ENCODE measurements at regions of chr2 and their contacts with region 1.

Region 1: DNA sequence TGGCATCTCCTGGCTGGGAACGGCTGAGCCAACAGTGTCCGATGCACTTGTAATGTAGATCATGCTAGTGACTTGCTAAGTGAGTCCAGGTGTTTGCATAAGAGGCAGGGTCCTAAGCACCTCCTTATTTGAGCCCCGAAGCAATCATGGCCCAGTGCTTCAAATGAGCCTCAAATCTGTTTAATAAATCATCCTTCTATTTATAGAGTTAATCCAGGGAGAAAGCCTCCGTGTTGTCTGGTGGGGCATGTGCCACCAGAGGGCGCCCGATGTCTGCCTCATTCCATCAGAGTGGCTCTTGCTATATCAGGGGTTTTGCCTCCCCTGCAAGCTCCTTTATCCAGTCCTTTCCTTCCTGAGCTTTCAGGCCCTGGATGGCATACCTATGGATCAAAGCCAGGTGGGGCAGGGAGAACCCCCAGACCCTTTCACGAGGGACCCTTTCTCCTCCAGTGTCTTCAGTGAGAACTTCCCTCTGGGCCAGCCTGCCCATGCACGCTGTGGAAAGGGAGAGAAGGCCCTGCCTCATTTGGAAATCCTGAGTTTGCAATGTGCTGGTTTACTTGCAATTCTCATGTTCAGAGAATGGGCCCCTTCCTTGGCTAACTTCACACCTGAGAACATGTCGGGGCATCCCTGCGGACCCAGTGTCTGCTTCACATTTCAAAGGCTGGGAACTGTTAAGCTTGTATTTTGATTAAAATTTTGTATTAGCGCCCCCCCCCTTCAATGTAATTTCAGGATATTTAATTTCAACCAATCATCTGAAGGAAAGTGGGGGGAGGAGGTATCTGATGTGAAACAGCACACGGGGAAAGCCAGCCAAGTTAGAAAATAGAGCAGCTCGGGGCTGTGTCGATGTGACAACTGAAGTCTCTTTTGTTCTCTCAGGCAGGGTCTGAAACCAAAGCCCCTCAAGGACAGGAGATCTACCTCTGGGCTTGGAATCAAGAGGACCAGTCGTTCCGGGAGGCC is 39.7 kb downstream of the RDH14 start:
- DNase-seq: peak; percentile 44 to 85 (median 76)
- ATAC-seq: peak; percentile 65
- H3K4me3 ChIP-seq: no peak overlapping the region
- H3K4me3 Mint-ChIP-seq: no peak overlapping the region
- H3K27ac ChIP-seq: no peak overlapping the region
- H3K27ac Mint-ChIP-seq: no peak overlapping the region
- H3K4me1 ChIP-seq: no peaks in the 10 kb centered on the region
- H3K4me1 Mint-ChIP-seq: no peaks in the 10 kb centered on the region
- H3K27me3 ChIP-seq: no peaks in the 10 kb centered on the region
- H3K27me3 Mint-ChIP-seq: peaks cover 26% of the 10 kb centered on the region
- CTCF ChIP-seq: peak; percentile 87

Region 2: DNA sequence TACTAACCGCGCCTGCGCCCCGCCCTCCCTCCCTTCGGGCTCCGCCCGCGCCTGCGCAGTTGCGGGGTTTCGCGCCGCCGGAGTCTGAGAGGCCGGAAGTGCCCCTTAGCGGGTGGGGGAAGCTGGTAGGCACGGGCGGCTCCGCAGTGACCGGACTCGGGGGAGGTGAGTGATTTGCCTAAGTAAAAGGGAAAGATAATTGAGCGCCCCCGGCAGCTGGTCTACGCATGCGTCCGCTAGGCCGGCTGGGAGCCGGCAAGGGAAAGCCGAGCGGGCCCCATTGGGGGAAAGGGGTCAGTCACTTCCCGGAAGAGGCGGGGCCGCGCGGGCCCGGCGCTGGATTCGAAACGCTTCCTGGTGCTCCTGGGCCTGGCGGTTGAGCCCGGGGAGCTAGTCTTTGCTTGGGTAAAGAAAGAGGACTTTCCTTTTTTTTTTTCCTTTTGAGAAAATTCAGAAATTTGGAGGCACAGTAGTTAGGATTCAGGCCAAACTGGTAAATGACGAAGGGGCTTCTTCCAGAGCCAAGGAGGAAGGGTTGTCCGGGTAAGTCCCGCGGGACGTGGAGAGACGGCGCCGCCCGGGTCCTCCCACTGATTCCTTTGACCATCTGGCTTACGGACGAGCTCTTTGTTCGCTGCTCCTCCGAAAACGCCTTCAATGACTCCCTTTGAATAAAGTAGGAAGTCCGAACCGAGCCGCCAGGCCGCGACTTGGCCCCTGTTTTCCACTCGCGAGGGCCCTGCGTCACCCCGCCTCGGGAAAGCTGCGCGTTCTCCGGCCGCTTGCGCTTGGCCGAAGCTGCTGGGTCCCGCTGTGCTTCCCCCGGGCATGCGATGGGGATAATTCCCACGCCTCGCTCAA is 766.7 kb before region 1 on chr2 and contains the starts of genes GEN1 and SMC6:
- CTCF ChIA-PET with region 1: no interaction called
- POLR2A ChIA-PET with region 1: no interaction called
- intact Hi-C with region 1: no loop called
- DNase-seq: peak; percentile 79 to 95 (median 90)
- ATAC-seq: peak; percentile 82
- H3K4me3 ChIP-seq: peak within 1 kb of the TSS; percentile 82 to 87
- H3K4me3 Mint-ChIP-seq: peak within 1 kb of the TSS; percentile 92
- H3K27ac ChIP-seq: peak within 1 kb of the TSS; percentile 95 to 100
- H3K27ac Mint-ChIP-seq: peak within 1 kb of the TSS; percentile 97
- H3K4me1 ChIP-seq: peaks cover 17% of the 10 kb centered on the region
- H3K4me1 Mint-ChIP-seq: peaks cover 27% of the 10 kb centered on the region
- H3K27me3 ChIP-seq: no peaks in the 10 kb centered on the region
- H3K27me3 Mint-ChIP-seq: no peaks in the 10 kb centered on the region
- CTCF ChIP-seq: no peak
- total RNA-seq, gene GEN1: 6.3 to 7.3 TPM
- total RNA-seq, gene SMC6: 5.0 to 6.2 TPM

Region 3: GRCh38 chr2:18067588-18068384 is 453.0 kb before region 1 on chr2:
- CTCF ChIA-PET with region 1: no interaction called
- POLR2A ChIA-PET with region 1: no interaction called
- intact Hi-C with region 1: no loop called
- DNase-seq: no peak
- ATAC-seq: no peak
- H3K4me3 ChIP-seq: no peak overlapping the region
- H3K4me3 Mint-ChIP-seq: no peak overlapping the region
- H3K27ac ChIP-seq: no peak overlapping the region
- H3K27ac Mint-ChIP-seq: no peak overlapping the region
- H3K4me1 ChIP-seq: no peaks in the 10 kb centered on the region
- H3K4me1 Mint-ChIP-seq: no peaks in the 10 kb centered on the region
- H3K27me3 ChIP-seq: no peaks in the 10 kb centered on the region
- H3K27me3 Mint-ChIP-seq: peaks cover 13% of the 10 kb centered on the region
- CTCF ChIP-seq: no peak

Region 4: GRCh38 chr2:18404708-18405107 is 116.0 kb before region 1 on chr2:
- CTCF ChIA-PET with region 1: no interaction called
- POLR2A ChIA-PET with region 1: no interaction called
- intact Hi-C with region 1: no loop called
- DNase-seq: no peak
- ATAC-seq: no peak
- H3K4me3 ChIP-seq: no peak overlapping the region
- H3K4me3 Mint-ChIP-seq: no peak overlapping the region
- H3K27ac ChIP-seq: no peak overlapping the region
- H3K27ac Mint-ChIP-seq: no peak overlapping the region
- H3K4me1 ChIP-seq: no peaks in the 10 kb centered on the region
- H3K4me1 Mint-ChIP-seq: no peaks in the 10 kb centered on the region
- H3K27me3 ChIP-seq: no peaks in the 10 kb centered on the region
- H3K27me3 Mint-ChIP-seq: peaks cover 8% of the 10 kb centered on the region
- CTCF ChIP-seq: no peak

Region 5: DNA sequence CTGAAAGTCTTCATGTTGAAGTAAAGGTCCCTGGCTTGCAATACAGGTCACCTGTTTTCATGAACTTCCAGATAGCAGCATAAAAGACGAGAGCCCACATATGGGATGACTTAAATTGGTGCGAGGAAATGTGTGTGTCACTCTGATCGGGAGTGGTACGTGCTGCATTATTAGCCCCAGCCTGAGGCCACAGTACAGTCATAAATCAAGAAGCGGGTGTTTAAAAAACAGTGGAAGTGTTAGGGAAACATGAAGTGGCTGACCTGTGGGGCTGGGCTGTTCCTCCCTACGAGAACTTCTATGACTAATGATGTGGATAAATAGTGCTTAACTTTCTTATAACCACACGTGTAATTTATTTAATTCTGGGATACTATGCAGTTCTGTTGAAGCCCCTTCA is 15.4 kb after region 1 on chr2:
- CTCF ChIA-PET with region 1: interaction called, 11 read pairs
- POLR2A ChIA-PET with region 1: no interaction called
- intact Hi-C with region 1: no loop called
- DNase-seq: no peak
- ATAC-seq: no peak
- H3K4me3 ChIP-seq: no peak overlapping the region
- H3K4me3 Mint-ChIP-seq: no peak overlapping the region
- H3K27ac ChIP-seq: no peak overlapping the region
- H3K27ac Mint-ChIP-seq: no peak overlapping the region
- H3K4me1 ChIP-seq: no peaks in the 10 kb centered on the region
- H3K4me1 Mint-ChIP-seq: no peaks in the 10 kb centered on the region
- H3K27me3 ChIP-seq: no peaks in the 10 kb centered on the region
- H3K27me3 Mint-ChIP-seq: peaks cover 13% of the 10 kb centered on the region
- CTCF ChIP-seq: no peak

Region 6: GRCh38 chr2:18588049-18588448 is 67.3 kb after region 1 on chr2:
- CTCF ChIA-PET with region 1: no interaction called
- POLR2A ChIA-PET with region 1: no interaction called
- intact Hi-C with region 1: no loop called
- DNase-seq: no peak
- ATAC-seq: no peak
- H3K4me3 ChIP-seq: no peak overlapping the region
- H3K4me3 Mint-ChIP-seq: no peak overlapping the region
- H3K27ac ChIP-seq: no peak overlapping the region
- H3K27ac Mint-ChIP-seq: no peak overlapping the region
- H3K4me1 ChIP-seq: no peaks in the 10 kb centered on the region
- H3K4me1 Mint-ChIP-seq: no peaks in the 10 kb centered on the region
- H3K27me3 ChIP-seq: no peaks in the 10 kb centered on the region
- H3K27me3 Mint-ChIP-seq: no peaks in the 10 kb centered on the region
- CTCF ChIP-seq: no peak

Region 7: DNA sequence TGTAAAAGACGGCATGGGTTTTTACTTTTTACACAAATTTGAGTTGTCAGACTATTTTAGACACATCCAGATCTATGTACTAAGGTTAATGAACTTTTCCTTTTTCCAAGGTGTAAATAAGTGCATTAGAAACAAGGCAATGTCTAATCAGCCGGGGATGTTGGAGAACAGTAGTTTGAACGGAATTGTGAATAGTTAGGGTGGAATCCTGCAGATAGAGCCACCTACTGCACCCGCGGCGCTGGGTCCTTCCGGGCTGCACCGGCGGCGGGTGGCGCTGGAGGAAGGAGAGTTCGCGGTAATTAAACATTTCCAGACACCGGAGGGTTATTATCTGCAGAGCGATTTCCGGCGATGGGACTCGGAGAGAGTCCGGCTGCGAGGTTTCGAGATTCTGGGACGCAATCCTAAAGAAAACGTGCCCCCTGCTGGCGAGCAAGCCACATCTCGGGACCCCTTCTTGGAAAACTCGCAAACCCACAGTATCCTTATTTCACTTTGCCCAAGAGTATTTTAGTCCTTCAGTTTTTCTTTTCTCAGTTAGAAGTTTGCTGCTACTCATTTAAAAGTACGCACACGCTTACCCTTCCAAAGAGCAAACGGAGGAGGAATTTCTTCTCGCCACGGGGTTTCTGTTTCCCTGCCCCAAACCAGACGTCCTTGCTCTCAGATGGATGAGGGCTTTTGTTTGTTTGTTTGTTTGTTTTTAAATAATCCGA is 842.2 kb after region 1 on chr2:
- CTCF ChIA-PET with region 1: interaction called, 15 read pairs
- POLR2A ChIA-PET with region 1: no interaction called
- intact Hi-C with region 1: loop called in 1 of 2 experiments (anchors 2 kb)
- DNase-seq: peak in 6 of 9 experiments; percentile 29 to 74 (median 52)
- ATAC-seq: peak; percentile 48
- H3K4me3 ChIP-seq: peak overlapping the region; percentile 67 to 70
- H3K4me3 Mint-ChIP-seq: peak overlapping the region; percentile 93
- H3K27ac ChIP-seq: no peak overlapping the region
- H3K27ac Mint-ChIP-seq: peak overlapping the region; percentile 68
- H3K4me1 ChIP-seq: peaks cover 36% of the 10 kb centered on the region
- H3K4me1 Mint-ChIP-seq: peaks cover 37% of the 10 kb centered on the region
- H3K27me3 ChIP-seq: peaks cover 28 to 33% of the 10 kb centered on the region in 2 experiments
- H3K27me3 Mint-ChIP-seq: peaks cover 33% of the 10 kb centered on the region
- CTCF ChIP-seq: peak; percentile 38

Region 8: GRCh38 chr2:19857806-19858205 is 1337.1 kb after region 1 on chr2:
- CTCF ChIA-PET with region 1: interaction called, 102 read pairs
- POLR2A ChIA-PET with region 1: no interaction called
- intact Hi-C with region 1: loop called in 1 of 2 experiments (anchors 1 kb)
- DNase-seq: no peak
- ATAC-seq: no peak
- H3K4me3 ChIP-seq: no peak overlapping the region
- H3K4me3 Mint-ChIP-seq: no peak overlapping the region
- H3K27ac ChIP-seq: no peak overlapping the region
- H3K27ac Mint-ChIP-seq: no peak overlapping the region
- H3K4me1 ChIP-seq: no peaks in the 10 kb centered on the region
- H3K4me1 Mint-ChIP-seq: no peaks in the 10 kb centered on the region
- H3K27me3 ChIP-seq: no peaks in the 10 kb centered on the region
- H3K27me3 Mint-ChIP-seq: peaks cover 7% of the 10 kb centered on the region
- CTCF ChIP-seq: no peak

Region 9: DNA sequence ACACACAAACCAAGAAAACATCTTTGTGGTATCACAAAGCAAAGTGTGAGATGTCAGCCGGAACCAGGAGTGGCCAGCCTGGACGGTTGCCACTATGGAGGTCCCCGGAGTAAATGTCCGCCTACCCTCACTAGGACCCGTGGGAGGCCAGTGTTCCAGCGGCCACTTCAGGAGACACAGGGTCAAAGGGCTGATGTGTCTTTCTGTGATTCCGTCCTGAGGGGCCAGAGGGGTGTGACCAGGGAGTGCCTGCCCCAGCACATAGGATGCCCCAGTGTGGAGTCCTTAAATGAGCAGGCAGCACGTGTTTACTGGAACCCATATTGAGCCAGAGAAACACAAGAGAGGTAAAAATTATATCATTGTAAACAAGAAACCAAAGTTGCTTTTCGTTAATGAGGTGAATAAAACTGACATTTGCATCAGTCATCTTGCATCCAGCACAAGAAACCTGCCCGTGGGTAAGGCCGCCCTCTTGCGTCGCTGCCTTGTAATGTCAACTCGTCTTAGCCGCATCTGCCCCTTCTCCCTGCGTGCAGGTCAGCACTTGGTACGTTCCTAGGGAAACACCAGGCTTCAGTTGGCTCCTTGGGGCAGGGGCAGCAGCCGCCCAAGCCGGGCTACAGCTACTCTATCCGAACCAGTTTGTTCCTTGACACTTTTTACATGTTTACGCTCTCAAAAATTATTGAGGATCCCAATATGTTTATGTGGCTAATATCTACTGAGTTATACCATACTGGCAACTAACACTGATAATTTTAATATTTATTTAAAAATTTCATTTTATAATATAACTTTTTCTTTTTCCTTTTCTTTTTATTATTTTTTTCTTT is 1577.4 kb after region 1 on chr2:
- CTCF ChIA-PET with region 1: no interaction called
- POLR2A ChIA-PET with region 1: no interaction called
- intact Hi-C with region 1: loop called in 1 of 2 experiments (anchors 2 kb)
- DNase-seq: peak; percentile 60 to 81 (median 73)
- ATAC-seq: peak; percentile 98
- H3K4me3 ChIP-seq: no peak overlapping the region
- H3K4me3 Mint-ChIP-seq: no peak overlapping the region
- H3K27ac ChIP-seq: no peak overlapping the region
- H3K27ac Mint-ChIP-seq: no peak overlapping the region
- H3K4me1 ChIP-seq: no peaks in the 10 kb centered on the region
- H3K4me1 Mint-ChIP-seq: no peaks in the 10 kb centered on the region
- H3K27me3 ChIP-seq: no peaks in the 10 kb centered on the region
- H3K27me3 Mint-ChIP-seq: peaks cover 13% of the 10 kb centered on the region
- CTCF ChIP-seq: peak; percentile 88

Measured in CD8-positive, alpha-beta T cell (primary cell).